PC-9 (cell line): ENCODE measurements at regions of chr3 and their contacts with region 1.

Region 1: GRCh38 chr3:187738331-187739093 is 6.8 kb downstream of the BCL6 start:
- DNase-seq: peak; percentile 82 to 87
- H3K4me3 ChIP-seq: peak overlapping the region; percentile 53
- H3K27ac ChIP-seq: 0 out of 2 replicates have a peak overlapping the region, but pooled peaks have one; percentile 3
- H3K4me1 ChIP-seq: peaks cover 55% of the 10 kb centered on the region
- H3K27me3 ChIP-seq: no peaks in the 10 kb centered on the region
- CTCF ChIP-seq: peak; percentile 85

Region 2: DNA sequence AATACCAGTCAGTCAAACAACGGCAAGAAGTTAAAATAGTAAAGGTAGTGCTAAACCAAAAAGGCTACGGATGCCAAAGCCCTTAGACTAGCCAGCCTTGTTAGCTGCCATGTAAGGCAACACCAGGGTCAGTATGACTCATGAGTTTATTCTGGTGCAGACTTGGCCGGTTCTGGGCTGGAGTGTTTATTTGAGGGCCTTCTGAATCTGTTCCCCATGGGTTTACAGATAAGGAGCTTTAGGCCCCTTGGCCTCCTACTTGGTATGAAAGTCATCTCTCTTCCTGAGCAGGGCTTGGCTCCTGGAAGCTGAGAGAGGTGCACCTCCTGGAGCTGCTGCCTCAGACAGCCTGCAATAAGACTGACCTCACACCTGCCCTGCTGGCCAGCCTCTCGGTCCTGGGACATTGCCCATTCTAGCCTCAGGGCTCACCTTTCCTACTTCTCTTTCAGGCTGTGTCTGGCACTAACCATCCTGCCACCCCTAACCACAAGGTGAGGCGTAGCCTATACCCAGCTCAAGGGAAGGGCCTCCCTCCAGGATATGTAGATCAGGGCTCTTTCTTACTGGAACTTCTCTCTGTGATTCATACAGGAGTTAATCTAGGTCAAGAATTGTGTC is 551.6 kb before region 1 on chr3:
- CTCF ChIA-PET with region 1: no interaction called
- POLR2A ChIA-PET with region 1: interaction called, 19 read pairs
- intact Hi-C with region 1: no loop called
- DNase-seq: peak; percentile 98 to 100
- H3K4me3 ChIP-seq: peak overlapping the region; percentile 16; the same call in 1 of the 2 replicates
- H3K27ac ChIP-seq: peak overlapping the region; percentile 83
- H3K4me1 ChIP-seq: peaks cover 60% of the 10 kb centered on the region
- H3K27me3 ChIP-seq: no peaks in the 10 kb centered on the region
- CTCF ChIP-seq: 0 out of 2 replicates have a peak, but pooled peaks have one; percentile 11

Region 3: GRCh38 chr3:188348435-188349244 is 610.1 kb after region 1 on chr3:
- CTCF ChIA-PET with region 1: interaction called, 3 read pairs
- POLR2A ChIA-PET with region 1: interaction called, 10 read pairs
- intact Hi-C with region 1: no loop called
- DNase-seq: peak; percentile 69 to 85
- H3K4me3 ChIP-seq: no peak overlapping the region
- H3K27ac ChIP-seq: peak overlapping the region; percentile 37
- H3K4me1 ChIP-seq: peaks cover 17% of the 10 kb centered on the region
- H3K27me3 ChIP-seq: no peaks in the 10 kb centered on the region
- CTCF ChIP-seq: no peak

Region 4: DNA sequence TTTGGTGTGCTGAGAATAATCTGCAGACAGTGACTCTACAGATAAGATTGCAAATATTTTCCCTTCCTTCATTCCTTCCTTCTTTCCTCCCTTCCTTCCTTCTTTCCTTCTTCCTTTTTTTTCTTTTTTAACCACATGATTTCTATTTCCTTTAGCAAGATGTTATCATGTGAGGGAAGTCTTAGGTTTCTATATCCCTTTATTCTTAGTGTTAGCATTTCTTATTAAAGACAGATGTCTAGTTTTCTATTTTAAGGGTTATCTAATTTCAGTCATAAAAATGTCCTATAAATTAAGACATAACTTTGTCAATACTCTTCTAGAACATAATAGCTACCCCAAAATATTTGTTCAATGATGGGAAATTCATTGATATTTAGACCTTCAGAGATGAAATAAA is 886.3 kb after region 1 on chr3:
- CTCF ChIA-PET with region 1: interaction called, 19 read pairs
- POLR2A ChIA-PET with region 1: interaction called, 3 read pairs
- intact Hi-C with region 1: no loop called
- DNase-seq: no peak
- H3K4me3 ChIP-seq: no peak overlapping the region
- H3K27ac ChIP-seq: no peak overlapping the region
- H3K4me1 ChIP-seq: peaks cover 20% of the 10 kb centered on the region
- H3K27me3 ChIP-seq: no peaks in the 10 kb centered on the region
- CTCF ChIP-seq: no peak

Region 5: DNA sequence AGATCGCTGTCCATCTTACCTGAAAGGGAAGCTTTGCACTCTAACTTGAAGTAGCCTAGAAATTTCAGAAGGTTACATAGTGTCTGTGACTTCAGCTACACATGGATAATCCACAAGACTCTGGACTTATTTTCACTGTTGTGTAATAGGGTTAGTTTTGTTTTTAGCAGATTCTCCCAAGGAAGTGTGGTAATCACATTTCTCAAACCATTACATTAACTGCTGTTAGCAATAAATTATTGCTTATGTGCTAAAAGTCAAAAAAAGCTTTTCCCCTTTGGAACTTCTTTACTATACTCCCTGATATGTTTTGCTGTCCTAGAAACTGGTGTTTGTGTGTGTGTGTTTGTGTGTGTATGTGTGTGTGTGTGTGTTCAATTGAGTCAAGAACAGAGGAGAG is 1081.4 kb after region 1 on chr3:
- CTCF ChIA-PET with region 1: no interaction called
- POLR2A ChIA-PET with region 1: no interaction called
- intact Hi-C with region 1: loop called (anchors 2 kb)
- DNase-seq: no peak
- H3K4me3 ChIP-seq: no peak overlapping the region
- H3K27ac ChIP-seq: no peak overlapping the region
- H3K4me1 ChIP-seq: peaks cover 33% of the 10 kb centered on the region
- H3K27me3 ChIP-seq: no peaks in the 10 kb centered on the region
- CTCF ChIP-seq: no peak

Region 6: DNA sequence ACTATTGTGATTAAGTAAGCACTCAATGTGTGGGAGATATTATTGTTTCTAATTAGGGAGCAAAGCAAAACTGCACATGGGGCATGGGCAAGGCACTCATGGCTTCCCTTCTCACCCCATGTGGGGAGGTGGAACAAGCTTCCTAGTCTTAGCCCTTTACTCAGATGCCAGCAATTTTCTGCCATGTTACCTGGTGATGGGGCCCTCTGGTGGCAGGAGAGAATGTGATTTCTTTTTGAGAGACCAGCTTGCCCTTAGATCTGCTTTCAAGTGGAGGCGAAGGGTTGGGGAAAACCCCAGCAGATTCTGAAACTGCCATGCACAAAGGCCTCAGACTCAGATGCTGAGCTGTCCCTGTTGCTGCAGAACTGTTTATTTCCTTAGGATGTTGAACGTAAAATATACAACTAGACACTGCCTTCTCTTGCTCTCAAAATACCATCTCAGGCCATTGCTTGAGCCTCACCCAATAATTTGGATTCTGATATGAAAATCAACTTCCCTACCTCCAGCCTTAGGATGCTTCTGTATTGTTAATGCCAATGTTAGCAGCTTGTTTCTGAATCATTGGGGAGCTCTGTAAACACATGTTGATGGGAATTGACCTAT is 1303.1 kb after region 1 on chr3:
- CTCF ChIA-PET with region 1: interaction called, 6 read pairs
- POLR2A ChIA-PET with region 1: no interaction called
- intact Hi-C with region 1: loop called (anchors 2 kb)
- DNase-seq: peak in 1 of 2 experiments; percentile 42
- H3K4me3 ChIP-seq: no peak overlapping the region
- H3K27ac ChIP-seq: no peak overlapping the region
- H3K4me1 ChIP-seq: no peaks in the 10 kb centered on the region
- H3K27me3 ChIP-seq: no peaks in the 10 kb centered on the region
- CTCF ChIP-seq: peak; percentile 71

Region 7: GRCh38 chr3:189394599-189395121 is 1656.1 kb after region 1 on chr3:
- CTCF ChIA-PET with region 1: no interaction called
- POLR2A ChIA-PET with region 1: no interaction called
- intact Hi-C with region 1: loop called (anchors 5 kb)
- DNase-seq: no peak
- H3K4me3 ChIP-seq: no peak overlapping the region
- H3K27ac ChIP-seq: peak overlapping the region; percentile 89
- H3K4me1 ChIP-seq: peaks cover 36% of the 10 kb centered on the region
- H3K27me3 ChIP-seq: no peaks in the 10 kb centered on the region
- CTCF ChIP-seq: no peak